Right ventricle myocardium superior (tissue), 1 donor: ENCODE measurements at regions of chr16 and their contacts with region 1.

Region 1: GRCh38 chr16:58000706-58001676 is at the start of gene USB1:
- DNase-seq: peak; percentile 93
- ATAC-seq: peak; percentile 95
- total RNA-seq, gene USB1: 32.1 TPM

Region 2: GRCh38 chr16:57757326-57757786 is 243.6 kb before region 1 on chr16:
- intact Hi-C with region 1: loop called (anchors 10 kb)
- DNase-seq: peak; percentile 94
- ATAC-seq: peak; percentile 94

Region 3: DNA sequence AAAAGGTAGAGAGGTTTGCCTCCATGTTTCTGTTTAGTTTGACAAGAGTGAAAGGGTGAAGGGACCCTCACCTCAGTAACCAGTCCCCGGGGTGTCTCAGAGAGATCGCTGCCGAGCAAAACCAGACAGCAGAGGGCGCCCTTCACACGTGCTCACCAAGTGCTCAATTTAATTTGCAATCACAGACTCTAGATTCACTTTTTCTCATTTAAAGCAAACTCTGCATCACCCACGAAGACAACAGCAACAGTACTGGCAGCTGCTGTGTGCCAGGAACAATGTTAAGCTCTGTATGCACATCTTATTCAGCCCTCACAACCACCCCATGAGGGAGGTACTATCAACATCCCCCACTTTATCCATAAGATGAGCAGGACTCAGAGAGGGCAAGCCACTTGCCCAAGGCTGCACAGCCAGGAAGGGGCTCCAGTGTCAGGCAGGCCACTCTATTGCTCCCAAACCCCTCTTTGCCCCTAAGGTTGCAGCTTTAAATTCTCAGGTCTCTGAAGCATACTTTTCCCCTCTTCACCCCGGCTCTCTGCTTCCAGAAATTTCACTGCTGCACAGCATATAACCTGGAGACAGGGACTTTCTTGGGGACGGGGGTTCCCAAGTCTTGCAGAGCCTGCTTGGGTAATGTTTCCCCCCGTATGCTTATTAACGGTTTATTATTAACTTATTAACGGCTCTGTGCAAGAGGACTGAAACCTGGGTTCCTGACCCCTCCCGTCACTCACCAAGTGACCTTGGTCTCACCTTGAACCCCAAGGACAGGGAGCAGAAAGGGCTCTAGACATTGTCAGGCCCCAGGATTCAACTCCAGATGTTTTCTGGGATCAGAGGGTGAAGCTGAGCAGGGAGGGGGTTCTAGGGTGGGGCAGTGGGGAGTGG is 101.0 kb before region 1 on chr16:
- intact Hi-C with region 1: loop called (anchors 2 kb)
- DNase-seq: peak; percentile 88
- ATAC-seq: peak; percentile 90

Region 4: DNA sequence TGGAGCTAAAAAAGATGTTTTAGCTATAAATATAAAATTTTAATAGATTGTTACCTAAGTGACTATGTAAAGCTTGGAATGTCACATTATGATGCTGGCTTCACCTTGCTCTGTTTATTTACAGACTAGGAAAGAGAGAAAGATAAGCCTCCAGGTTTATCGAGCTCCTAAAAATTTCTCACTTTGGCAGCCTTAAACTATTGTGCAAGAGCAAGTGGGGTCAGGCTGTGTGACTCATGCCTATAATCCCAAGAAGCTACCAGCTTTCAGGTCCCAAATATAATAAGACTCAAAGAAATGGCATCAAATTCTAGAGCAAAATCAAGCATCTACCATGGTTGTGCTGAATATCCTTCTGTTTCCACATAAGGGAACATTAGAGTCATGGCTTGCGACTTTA is 328.2 kb after region 1 on chr16:
- intact Hi-C with region 1: no loop called
- DNase-seq: no peak
- ATAC-seq: peak; percentile 67

Region 5: DNA sequence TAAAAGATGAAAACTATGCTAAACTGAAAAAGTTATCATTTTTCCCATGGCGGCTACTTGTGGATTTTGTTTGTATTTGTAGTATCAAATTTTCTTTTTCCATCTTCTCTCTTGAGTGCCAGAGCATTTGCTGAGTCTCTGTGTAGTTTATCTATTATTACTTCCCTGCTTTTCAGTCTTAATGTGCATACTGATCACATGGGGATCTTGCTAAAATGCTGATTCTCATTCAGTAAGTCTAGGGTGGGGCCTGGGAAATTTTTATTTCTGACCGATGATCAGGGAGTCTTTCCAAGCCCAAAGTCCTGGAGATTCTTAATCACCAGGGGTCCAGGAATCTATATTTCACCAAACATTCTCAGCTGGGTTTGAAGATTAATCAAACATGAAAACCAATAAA is 922.1 kb after region 1 on chr16:
- intact Hi-C with region 1: no loop called
- DNase-seq: no peak
- ATAC-seq: no peak